PC-9 (cell line): ENCODE measurements at regions of chr16 and their contacts with region 1.

Region 1: DNA sequence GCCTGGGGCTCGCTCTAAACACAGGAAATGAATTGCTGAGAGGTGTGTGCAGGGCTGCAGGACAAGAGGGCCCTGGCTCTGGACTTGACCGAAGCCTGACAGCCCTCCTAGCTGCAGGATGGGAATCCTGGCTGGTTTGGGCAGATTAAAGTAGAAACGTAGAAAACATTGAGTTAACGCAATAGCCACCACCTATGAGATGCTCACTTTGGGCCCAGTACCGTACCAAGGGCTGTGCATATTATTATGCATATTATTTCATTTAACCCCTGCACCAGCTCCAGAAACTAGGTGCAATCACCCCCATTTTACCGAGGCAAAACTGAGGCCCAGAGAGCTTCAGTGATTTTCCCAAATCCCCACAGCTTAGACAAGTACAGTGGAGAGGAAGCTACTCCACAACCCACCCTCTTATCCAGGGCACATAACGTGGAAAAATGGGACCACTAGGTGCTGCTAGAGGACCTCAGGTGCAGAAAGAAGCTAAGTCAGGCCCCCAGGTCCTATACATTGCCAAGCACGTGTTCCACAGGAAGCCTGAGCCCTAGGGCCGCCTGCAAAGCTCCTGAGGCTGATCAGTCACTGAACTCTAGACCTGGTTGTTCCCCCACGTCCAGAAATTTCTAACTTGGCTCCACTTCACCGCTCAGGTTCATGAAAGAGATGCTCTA is 79.2 kb downstream of the MYH11 start:
- DNase-seq: peak; percentile 50 to 53
- H3K4me3 ChIP-seq: no peak overlapping the region
- H3K27ac ChIP-seq: no peak overlapping the region
- H3K4me1 ChIP-seq: no peaks in the 10 kb centered on the region
- H3K27me3 ChIP-seq: no peaks in the 10 kb centered on the region
- CTCF ChIP-seq: peak; percentile 67

Region 2: DNA sequence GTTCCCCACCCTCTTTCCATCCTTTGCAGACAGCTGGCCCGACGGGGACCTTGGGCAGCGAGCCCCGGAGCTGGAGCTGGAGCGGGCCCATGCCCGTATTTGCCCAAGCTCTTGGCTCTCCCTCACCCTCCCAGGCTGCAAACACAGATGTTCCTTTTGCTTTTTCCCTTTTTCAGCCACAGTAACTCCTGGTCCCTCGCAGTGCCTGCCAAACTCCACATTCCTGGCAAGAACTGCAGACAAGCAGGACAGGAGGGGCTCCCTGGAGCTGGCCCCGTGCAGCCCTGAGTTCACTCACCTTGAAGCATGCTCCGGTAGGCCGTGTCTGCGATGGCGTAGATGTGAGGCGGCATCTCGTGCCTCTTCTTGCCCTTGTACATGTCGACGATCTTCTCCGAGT is 45.3 kb after region 1 on chr16:
- CTCF ChIA-PET with region 1: interaction called, 9 read pairs
- POLR2A ChIA-PET with region 1: no interaction called
- intact Hi-C with region 1: loop called (anchors 5 kb)
- DNase-seq: no peak
- H3K4me3 ChIP-seq: no peak overlapping the region
- H3K27ac ChIP-seq: no peak overlapping the region
- H3K4me1 ChIP-seq: no peaks in the 10 kb centered on the region
- H3K27me3 ChIP-seq: peaks cover 1% of the 10 kb centered on the region; the same call in 1 of the 2 replicates
- CTCF ChIP-seq: no peak

Region 3: DNA sequence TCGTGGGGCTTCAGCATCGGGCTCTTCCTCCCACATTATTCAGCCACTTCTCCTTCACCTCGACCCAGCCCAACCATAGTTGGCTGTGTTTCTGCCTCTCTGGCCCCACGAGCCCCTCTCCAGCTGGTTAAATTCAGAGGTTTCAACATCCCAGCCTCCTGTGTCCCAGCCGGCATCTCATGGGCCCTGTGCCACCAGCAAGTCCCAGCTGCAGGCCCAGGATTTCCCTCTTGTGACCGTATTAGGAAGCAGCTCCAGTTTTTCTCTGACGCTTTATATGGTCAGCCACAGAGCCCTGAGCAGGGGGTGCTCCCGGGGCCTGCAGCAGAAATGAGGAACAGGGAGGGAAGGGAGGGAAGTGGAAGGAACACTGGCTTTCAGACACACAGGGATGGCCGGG is 51.8 kb after region 1 on chr16:
- CTCF ChIA-PET with region 1: interaction called, 12 read pairs
- POLR2A ChIA-PET with region 1: no interaction called
- intact Hi-C with region 1: loop called (anchors 5 kb)
- DNase-seq: no peak
- H3K4me3 ChIP-seq: no peak overlapping the region
- H3K27ac ChIP-seq: no peak overlapping the region
- H3K4me1 ChIP-seq: no peaks in the 10 kb centered on the region
- H3K27me3 ChIP-seq: no peaks in the 10 kb centered on the region
- CTCF ChIP-seq: no peak

Region 4: DNA sequence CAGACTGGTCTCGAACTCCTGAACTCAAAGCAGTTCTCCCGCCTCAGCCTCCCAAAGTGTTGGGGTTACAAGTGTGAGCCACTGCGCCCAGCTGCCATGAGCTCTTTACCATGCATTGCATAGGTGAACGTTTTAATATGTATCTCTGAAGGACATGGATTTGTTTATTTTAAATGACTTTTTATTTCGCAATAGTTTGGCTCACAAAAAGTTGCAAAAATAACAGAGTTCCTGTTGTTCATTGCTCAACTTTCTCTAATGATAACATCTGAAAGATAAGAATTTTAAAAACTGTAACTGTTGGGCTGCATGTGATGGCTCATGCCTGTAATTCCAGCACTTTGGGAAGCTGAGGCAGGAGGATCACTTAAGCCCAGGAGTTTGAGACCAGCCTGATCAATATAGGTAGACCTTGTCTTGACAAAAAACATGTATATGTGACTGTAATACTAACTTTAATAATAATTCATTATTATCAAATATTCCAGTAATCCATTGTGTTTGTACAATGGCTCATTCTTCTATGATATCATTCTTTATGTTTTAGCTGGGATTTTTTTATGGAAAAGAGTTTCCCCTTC is 251.9 kb after region 1 on chr16:
- CTCF ChIA-PET with region 1: interaction called, 19 read pairs
- POLR2A ChIA-PET with region 1: no interaction called
- intact Hi-C with region 1: no loop called
- DNase-seq: peak in 1 of 2 experiments; percentile 90
- H3K4me3 ChIP-seq: no peak overlapping the region
- H3K27ac ChIP-seq: peak overlapping the region; percentile 90
- H3K4me1 ChIP-seq: peaks cover 61% of the 10 kb centered on the region
- H3K27me3 ChIP-seq: no peaks in the 10 kb centered on the region
- CTCF ChIP-seq: no peak

Region 5: DNA sequence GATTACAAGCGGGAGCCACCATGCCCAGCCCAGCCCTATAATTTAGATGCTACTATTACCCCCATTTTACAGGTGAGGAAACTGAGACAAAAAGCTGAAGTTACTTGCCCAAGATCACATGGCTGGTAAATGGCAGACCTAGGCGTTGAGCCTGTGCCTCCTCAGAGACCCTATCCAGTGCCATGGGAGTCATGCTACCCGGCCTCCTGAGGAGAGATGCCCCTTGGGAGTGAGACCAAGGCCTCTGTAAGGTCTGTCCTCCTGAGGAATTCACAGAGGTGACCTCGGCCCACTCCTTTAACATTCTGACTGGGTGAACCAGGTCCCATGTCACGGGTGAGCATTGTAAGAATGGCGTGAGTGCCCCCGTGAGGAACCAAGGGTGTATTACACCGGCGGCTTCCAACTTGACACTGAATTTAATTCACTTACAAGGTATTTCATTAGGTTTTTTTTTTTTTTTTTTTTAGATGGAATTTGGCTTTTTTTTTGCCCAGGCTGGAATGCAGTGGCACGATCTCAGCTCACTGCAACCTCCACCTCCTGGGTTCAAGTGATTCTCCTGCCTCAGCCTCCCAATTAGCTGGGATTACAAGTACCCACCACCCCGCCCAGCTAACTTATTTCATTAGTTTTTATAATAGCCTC is 349.9 kb after region 1 on chr16:
- CTCF ChIA-PET with region 1: interaction called, 3 read pairs
- POLR2A ChIA-PET with region 1: no interaction called
- intact Hi-C with region 1: loop called (anchors 1 kb)
- DNase-seq: peak; percentile 69 to 79
- H3K4me3 ChIP-seq: no peak overlapping the region
- H3K27ac ChIP-seq: no peak overlapping the region
- H3K4me1 ChIP-seq: no peaks in the 10 kb centered on the region
- H3K27me3 ChIP-seq: no peaks in the 10 kb centered on the region
- CTCF ChIP-seq: peak; percentile 93